Panc1 (cell line): ENCODE measurements at regions of chrX and their contacts with region 1.

Region 1: DNA sequence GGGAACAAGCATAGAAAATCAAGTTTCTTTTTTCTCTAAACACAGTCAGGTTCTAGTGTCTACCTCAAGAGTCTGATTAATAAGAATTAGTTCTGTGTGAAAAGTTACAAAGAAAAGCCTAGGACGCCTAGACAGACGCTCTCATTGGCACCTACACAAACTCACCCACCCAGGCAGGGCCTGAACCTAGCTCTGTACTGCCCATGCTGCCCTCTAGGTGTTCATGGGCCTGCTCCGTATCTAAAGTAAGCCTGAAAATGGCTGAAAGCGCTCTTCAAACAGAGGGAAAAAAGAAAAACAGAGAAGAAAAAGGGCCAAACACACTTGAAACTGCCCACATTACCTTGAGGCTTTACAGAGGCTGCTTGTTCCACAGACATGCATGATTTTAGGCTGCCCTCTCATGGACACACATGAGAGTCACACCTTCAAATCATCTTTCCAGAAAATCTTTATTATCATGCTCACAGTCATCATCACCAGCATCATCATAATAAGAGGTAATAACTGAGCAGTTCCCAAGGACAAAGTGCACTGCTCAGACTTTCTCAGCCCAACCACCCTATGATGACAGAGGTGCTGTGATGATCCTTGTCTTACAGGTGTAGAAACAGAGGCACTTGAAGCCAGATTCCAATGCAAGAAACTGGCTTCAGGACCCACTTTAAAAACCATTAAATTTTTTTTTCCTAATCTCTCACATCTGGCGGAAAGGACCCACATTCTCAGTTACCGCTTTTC is 49.6 kb downstream of the MAP7D2 start:
- DNase-seq: peak; percentile 30
- ATAC-seq: peak; percentile 85
- H3K4me3 ChIP-seq: no peak overlapping the region
- H3K27ac ChIP-seq: no peak overlapping the region
- H3K4me1 ChIP-seq: peaks cover 6% of the 10 kb centered on the region; the same call in 1 of the 2 replicates
- H3K27me3 ChIP-seq: no peaks in the 10 kb centered on the region
- CTCF ChIP-seq: peak; percentile 72

Region 2: DNA sequence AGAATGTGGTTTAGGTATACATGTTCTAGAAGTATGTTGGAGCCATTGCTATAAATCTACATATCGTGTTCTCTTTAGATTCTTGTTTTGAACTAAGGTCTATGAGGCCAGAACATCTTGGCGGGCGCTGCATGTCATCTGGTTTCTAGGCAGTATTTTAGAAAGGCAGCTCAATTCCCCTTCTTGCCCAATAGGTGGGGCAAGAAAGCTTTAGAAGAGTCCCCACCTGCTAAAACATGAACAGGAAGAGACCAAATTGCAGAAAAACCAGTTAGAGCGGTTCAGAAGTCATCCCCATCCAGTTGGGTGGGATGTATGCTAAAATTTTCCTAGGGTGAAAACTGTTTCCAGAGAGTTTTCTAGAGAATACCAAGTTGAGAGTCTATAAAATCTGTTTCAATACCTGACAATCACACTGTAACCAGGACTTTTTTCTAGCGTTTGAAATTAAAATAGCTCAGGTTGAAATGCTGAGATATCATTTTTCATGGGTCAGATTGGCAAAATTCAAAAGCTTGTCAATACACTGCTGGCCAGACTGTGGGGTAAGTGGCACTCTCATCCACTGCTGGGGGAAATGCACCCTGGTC is 162.3 kb before region 1 on chrX:
- CTCF ChIA-PET with region 1: interaction called, 5 read pairs
- POLR2A ChIA-PET with region 1: no interaction called
- in situ Hi-C with region 1: no loop called
- intact Hi-C with region 1: loop called (anchors 5 kb)
- DNase-seq: no peak
- ATAC-seq: peak; percentile 62; the same call in 1 of the 2 replicates
- H3K4me3 ChIP-seq: no peak overlapping the region
- H3K27ac ChIP-seq: no peak overlapping the region
- H3K4me1 ChIP-seq: no peaks in the 10 kb centered on the region
- H3K27me3 ChIP-seq: no peaks in the 10 kb centered on the region
- CTCF ChIP-seq: peak; percentile 78

Region 3: DNA sequence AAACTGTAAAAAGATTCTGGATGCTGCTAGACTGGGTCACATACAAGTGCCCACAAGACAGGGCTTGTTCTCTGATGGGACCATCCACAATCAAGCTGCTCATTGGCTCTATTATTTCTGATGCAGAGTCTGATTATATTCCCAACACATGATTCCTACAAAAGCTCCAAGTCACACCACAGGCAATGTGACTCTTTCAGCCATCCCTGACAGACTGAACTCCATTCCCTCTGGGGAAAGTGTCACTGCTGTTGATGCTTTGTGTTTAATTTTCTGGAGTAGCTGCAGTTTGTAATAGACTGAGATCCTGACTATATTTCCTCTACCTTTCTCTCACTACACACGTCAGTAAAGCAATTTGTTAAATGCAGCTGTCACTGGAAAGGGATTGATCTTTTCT is 20.9 kb before region 1 on chrX:
- CTCF ChIA-PET with region 1: no interaction called
- POLR2A ChIA-PET with region 1: no interaction called
- in situ Hi-C with region 1: no loop called
- intact Hi-C with region 1: no loop called
- DNase-seq: no peak
- ATAC-seq: no peak
- H3K4me3 ChIP-seq: no peak overlapping the region
- H3K27ac ChIP-seq: no peak overlapping the region
- H3K4me1 ChIP-seq: no peaks in the 10 kb centered on the region
- H3K27me3 ChIP-seq: no peaks in the 10 kb centered on the region
- CTCF ChIP-seq: no peak

Region 4: GRCh38 chrX:20056704-20057103 is 10.4 kb before region 1 on chrX:
- CTCF ChIA-PET with region 1: no interaction called
- POLR2A ChIA-PET with region 1: interaction called, 10 read pairs
- in situ Hi-C with region 1: no loop called
- intact Hi-C with region 1: no loop called
- DNase-seq: no peak
- ATAC-seq: no peak
- H3K4me3 ChIP-seq: no peak overlapping the region
- H3K27ac ChIP-seq: no peak overlapping the region
- H3K4me1 ChIP-seq: no peaks in the 10 kb centered on the region
- H3K27me3 ChIP-seq: no peaks in the 10 kb centered on the region
- CTCF ChIP-seq: no peak

Region 5: GRCh38 chrX:20212486-20213089 is 145.4 kb after region 1 on chrX:
- CTCF ChIA-PET with region 1: no interaction called
- POLR2A ChIA-PET with region 1: no interaction called
- in situ Hi-C with region 1: no loop called
- intact Hi-C with region 1: no loop called
- DNase-seq: no peak
- ATAC-seq: no peak
- H3K4me3 ChIP-seq: no peak overlapping the region
- H3K27ac ChIP-seq: no peak overlapping the region
- H3K4me1 ChIP-seq: no peaks in the 10 kb centered on the region
- H3K27me3 ChIP-seq: no peaks in the 10 kb centered on the region
- CTCF ChIP-seq: no peak

Region 6: GRCh38 chrX:20594985-20595384 is 527.8 kb after region 1 on chrX:
- CTCF ChIA-PET with region 1: no interaction called
- POLR2A ChIA-PET with region 1: no interaction called
- in situ Hi-C with region 1: no loop called
- intact Hi-C with region 1: no loop called
- DNase-seq: no peak
- ATAC-seq: no peak
- H3K4me3 ChIP-seq: no peak overlapping the region
- H3K27ac ChIP-seq: no peak overlapping the region
- H3K4me1 ChIP-seq: no peaks in the 10 kb centered on the region
- H3K27me3 ChIP-seq: no peaks in the 10 kb centered on the region
- CTCF ChIP-seq: peak; percentile 30; the same call in 1 of the 2 replicates